ENCODE measurements at regions of chr18 and their contacts with region 1.

Region 1: GRCh38 chr18:32092422-32093101 is 888 bp downstream of the RNF138 start:
- DNase-seq: peak; percentile 100
- ATAC-seq: peak; percentile 90
- H3K4me3 Mint-ChIP-seq: peak overlapping the region; percentile 98
- H3K27ac Mint-ChIP-seq: peak overlapping the region; percentile 96
- H3K4me1 Mint-ChIP-seq: peaks cover 44% of the 10 kb centered on the region
- H3K27me3 Mint-ChIP-seq: no peaks in the 10 kb centered on the region
- CTCF ChIP-seq: no peak

Region 2: DNA sequence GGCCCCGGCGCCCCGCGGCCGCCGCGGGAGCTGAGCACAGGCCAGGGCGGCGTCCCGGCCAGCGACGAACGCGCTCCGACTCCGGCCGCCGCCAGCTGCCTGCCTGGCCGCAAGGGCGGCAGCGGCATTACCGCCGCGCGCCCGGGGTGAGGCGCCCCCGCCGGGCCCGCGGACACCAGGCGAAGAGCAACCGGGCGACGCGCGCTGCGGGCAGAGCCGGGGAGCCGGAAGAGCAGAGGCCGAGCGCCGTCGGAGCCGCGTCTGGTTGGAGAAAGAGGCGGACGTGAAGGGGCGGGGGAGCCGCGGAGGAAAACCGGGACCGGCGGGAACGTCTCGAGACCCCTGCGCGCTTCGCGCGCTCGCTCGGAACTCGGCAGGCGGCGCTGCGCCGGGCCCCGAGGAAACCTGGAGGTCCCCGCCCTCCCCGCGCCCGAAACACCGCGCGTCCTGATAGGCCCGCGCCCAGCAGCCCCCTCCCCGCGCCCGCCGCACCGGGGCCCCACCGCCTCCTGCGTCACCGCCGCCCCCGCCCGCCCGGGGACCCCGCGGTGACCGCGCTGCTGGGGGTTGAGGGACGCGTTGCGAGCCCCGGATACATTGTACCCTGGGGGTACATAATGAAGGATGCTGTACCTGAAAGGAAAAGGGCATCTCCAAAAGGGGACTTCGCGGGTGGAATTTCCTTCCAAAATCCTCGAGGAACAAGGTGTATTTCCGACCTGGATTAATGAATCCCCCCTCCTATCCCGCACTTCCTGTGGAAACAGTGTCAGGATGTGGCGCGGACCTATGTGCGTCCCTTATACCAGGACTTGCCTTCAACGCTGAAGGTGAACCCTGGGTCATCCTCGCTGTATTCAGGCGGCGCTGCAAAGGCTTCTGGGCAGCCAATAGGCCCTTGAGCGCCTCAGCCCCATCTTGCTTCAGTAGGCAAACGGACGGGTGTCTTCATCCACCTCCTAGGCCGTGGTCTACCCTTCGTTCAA is 407.2 kb before region 1 on chr18:
- CTCF ChIA-PET with region 1: no interaction called
- POLR2A ChIA-PET with region 1: no interaction called
- intact Hi-C with region 1: loop called (anchors 2 kb)
- DNase-seq: peak; percentile 56
- ATAC-seq: peak; percentile 80
- H3K4me3 Mint-ChIP-seq: peak overlapping the region; percentile 82
- H3K27ac Mint-ChIP-seq: peak overlapping the region; percentile 56
- H3K4me1 Mint-ChIP-seq: peaks cover 17% of the 10 kb centered on the region
- H3K27me3 Mint-ChIP-seq: peaks cover 21% of the 10 kb centered on the region
- CTCF ChIP-seq: no peak

Region 3: DNA sequence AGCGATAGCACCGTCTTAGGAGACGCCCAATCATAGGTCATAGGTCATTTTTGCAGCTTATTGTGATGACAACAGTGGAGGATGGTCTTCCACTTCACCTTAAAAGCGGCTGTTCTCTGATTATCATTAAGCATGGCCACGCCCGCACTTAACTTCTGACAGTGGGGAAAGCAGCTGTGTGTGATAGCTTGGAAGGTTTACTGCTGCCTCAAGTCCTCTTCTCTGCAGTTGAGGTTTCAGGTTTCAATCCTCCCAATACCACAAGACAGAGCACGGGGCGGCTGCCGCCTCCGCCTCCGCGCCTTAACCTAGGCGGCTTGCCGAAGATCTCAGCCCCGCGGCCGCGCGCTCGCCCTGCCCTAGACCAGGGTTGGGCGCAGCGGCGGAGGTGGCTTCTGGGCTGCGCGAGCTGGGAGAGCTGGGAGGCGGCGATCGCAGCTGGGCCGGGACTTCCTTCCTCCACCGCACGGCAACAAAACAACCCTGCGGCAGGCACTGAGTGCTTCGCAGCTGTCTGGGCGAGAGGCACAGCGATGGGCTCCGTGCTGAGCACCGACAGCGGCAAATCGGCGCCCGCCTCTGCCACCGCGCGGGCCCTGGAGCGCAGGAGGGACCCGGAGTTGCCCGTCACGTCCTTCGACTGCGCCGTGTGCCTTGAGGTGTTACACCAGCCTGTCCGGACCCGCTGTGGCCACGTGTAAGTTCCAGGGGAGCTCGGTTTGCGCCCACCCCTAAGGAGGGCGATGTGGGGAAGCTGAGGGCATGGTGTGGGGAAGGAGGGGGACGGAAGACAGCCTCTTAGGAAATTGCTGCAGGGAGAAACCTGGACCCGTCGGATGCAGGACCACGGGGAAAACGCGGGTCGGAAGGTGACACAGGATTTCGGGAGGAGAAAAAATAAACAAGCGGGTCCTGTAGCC is 74.0 kb before region 1 on chr18 and contains the start of gene RNF125:
- CTCF ChIA-PET with region 1: no interaction called
- POLR2A ChIA-PET with region 1: interaction called, 85 read pairs
- intact Hi-C with region 1: loop called (anchors 1 kb)
- DNase-seq: peak; percentile 73
- ATAC-seq: peak; percentile 85
- H3K4me3 Mint-ChIP-seq: peak within 1 kb of the TSS; percentile 93
- H3K27ac Mint-ChIP-seq: peak within 1 kb of the TSS; percentile 89
- H3K4me1 Mint-ChIP-seq: peaks cover 21% of the 10 kb centered on the region
- H3K27me3 Mint-ChIP-seq: no peaks in the 10 kb centered on the region
- CTCF ChIP-seq: no peak
- total RNA-seq, gene RNF125: 2.1 and 3.1 TPM in 2 replicates

Region 4: GRCh38 chr18:32040936-32041335 is 51.6 kb before region 1 on chr18:
- CTCF ChIA-PET with region 1: no interaction called
- POLR2A ChIA-PET with region 1: interaction called, 16 read pairs
- intact Hi-C with region 1: loop called (anchors 2 kb)
- DNase-seq: no peak
- ATAC-seq: peak; percentile 54
- H3K4me3 Mint-ChIP-seq: peak overlapping the region; percentile 17
- H3K27ac Mint-ChIP-seq: peak overlapping the region; percentile 67
- H3K4me1 Mint-ChIP-seq: peaks cover 41% of the 10 kb centered on the region
- H3K27me3 Mint-ChIP-seq: no peaks in the 10 kb centered on the region
- CTCF ChIP-seq: no peak

Region 5: DNA sequence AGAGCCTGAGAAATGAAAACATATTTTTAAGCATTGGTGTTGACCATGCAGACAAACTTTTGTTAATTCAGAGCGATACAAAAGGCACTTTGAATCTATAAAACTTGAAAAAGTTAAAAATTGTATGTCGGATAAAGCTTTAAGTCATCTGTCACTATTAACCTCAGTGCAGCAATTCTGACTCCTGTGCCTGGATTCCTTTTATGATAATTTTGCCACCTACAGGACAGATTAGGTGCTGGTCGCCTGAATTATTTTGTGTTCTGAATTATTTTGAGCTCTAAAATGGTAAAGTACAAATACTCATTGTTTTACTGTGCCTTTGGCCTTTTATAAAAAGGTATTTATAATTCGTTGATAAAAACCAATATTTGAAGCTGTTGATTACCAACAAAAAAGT is 20.2 kb before region 1 on chr18:
- CTCF ChIA-PET with region 1: interaction called, 7 read pairs
- POLR2A ChIA-PET with region 1: interaction called, 7 read pairs
- intact Hi-C with region 1: loop called (anchors 2 kb)
- DNase-seq: no peak
- ATAC-seq: peak; percentile 28
- H3K4me3 Mint-ChIP-seq: no peak overlapping the region
- H3K27ac Mint-ChIP-seq: no peak overlapping the region
- H3K4me1 Mint-ChIP-seq: no peaks in the 10 kb centered on the region
- H3K27me3 Mint-ChIP-seq: no peaks in the 10 kb centered on the region
- CTCF ChIP-seq: no peak

Region 6: GRCh38 chr18:32884543-32884942 is 792.0 kb after region 1 on chr18:
- CTCF ChIA-PET with region 1: no interaction called
- POLR2A ChIA-PET with region 1: no interaction called
- intact Hi-C with region 1: loop called (anchors 5 kb)
- DNase-seq: peak; percentile 51
- ATAC-seq: peak; percentile 99
- H3K4me3 Mint-ChIP-seq: peak overlapping the region; percentile 53
- H3K27ac Mint-ChIP-seq: peak overlapping the region; percentile 89
- H3K4me1 Mint-ChIP-seq: peaks cover 86% of the 10 kb centered on the region
- H3K27me3 Mint-ChIP-seq: no peaks in the 10 kb centered on the region
- CTCF ChIP-seq: no peak